ENCODE measurements at regions of chr2 and their contacts with region 1.

Region 1: DNA sequence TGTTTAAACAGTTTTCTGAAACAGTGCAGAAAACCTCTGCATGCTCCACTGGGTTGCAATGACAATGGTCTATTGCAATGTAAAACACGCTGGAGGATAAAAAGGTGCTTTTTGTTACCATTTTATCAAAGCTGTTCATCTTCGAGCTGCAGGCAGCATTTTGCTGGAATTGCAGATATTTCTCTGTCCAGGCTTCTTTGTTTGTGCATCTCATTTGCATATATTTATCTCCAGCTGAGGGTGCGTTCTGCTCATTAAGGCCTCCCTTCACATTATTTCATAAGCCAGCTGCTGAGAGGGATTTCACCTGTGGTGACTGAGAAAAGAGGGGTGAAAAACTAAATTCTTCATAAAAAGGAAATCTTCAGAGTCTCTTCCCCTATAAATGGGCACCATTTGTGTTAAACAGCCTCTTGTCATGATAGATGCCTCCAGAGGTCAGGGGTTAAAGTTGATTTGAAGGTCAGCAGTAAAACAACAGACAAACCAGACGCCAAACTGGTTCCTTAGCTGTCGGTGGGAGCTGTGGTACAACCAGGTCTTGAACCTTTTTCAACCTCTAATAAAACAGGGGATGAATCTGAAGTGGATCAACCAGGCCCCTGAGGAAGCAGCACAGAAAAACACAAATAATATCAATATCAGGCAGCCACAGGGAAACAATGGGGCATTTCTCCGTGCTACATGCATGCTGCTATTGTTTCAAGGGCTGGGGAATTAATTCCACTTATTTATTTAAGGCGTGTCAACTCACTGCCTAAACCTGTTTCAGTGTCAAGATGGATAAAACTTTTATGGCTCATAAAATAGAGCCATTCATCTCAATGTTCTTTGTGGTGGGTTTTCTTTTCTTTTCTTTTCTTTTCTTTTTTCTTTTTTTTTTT is 265.1 kb downstream of the MEIS1 start:
- DNase-seq: no peak
- ATAC-seq: peak; percentile 79

Region 2: GRCh38 chr2:66439812-66440542 is 260.1 kb before region 1 on chr2:
- intact Hi-C with region 1: loop called (anchors 5 to 10 kb)
- DNase-seq: no peak
- ATAC-seq: no peak

Measured in left colon (tissue), 2 donors.